ENCODE measurements at regions of chr9 and their contacts with region 1.

Region 1: GRCh38 chr9:72022841-72023240 is 37.6 kb downstream of the C9orf57 start:
- DNase-seq: no peak
- ATAC-seq: no peak
- H3K4me3 ChIP-seq: no peak overlapping the region
- H3K27ac ChIP-seq: no peak overlapping the region
- H3K4me1 ChIP-seq: no peaks in the 10 kb centered on the region
- H3K27me3 ChIP-seq: no peaks in the 10 kb centered on the region
- CTCF ChIP-seq: no peak
- POLR2A ChIP-seq: no peak

Region 2: DNA sequence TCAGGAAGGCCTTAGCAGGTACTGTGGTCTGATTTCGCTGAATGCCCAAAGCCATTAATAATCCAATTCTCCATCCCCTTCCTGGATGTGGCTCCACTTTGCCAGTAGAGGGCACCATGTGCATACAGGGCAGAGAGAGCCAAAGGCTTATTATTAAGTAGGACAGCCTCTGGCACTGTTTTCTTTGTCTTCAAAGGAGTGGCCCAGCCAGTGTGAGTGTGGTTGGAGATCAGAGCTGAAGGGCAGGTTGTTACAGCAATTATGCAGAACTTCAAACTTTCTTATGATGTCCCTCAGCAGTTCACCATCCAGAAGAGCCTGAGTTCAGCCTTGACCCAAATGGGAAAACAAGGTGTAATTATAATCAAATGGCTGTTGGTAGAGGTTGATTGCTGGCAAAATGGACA is 215.9 kb before region 1 on chr9:
- intact Hi-C with region 1: loop called (anchors 5 kb)
- DNase-seq: peak; percentile 71 to 84 (median 80)
- ATAC-seq: peak; percentile 100
- H3K4me3 ChIP-seq: no peak overlapping the region
- H3K27ac ChIP-seq: peak overlapping the region in 1 of 4 donors; percentile 49
- H3K4me1 ChIP-seq: no peaks in the 10 kb centered on the region
- H3K27me3 ChIP-seq: no peaks in the 10 kb centered on the region
- CTCF ChIP-seq: peak; percentile 76 to 97 (median 91)
- POLR2A ChIP-seq: no peak

Region 3: DNA sequence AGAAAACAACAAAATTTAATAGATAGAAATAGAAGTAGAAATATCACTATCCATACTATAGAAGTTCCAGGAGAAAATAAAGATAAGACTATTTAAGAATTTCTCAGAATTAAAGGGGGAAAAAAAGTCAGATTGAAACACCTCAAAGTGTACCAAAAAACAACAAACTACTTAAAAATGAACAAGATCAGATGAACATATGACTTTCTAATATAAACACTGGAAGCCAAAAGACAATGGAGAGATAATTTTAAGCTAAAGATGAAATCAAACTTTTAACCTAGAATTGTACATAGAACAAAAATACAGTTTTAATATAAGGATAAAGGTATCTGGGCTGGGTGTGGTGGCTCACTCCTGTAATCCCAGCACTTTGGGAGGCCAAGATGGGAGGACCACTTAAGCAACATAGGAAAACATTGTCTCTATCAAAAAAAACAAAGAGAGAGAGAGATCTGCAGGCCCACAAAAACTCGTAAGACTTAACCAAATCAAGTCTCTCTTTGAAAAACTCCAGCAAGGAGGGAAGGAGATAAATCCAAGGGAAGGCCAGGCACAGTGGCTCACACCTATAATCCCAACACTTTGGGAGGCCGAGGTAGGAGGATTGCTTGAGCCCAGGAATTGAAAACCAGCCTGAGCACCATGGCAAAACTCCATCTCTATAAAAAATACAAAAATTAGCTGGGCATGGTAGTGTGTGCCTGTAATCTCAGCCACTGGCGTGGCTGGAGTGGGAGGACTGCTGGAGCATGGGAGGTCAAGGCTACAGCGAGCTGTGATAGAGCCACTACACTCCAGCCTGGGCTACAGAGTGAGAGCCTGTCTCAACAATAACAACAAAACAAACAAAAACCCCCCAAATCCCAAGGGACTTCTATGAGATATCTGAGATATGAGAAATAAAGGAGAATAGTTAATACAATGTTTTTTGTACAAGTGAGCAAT is 144.2 kb before region 1 on chr9:
- intact Hi-C with region 1: no loop called
- DNase-seq: no peak
- ATAC-seq: no peak
- H3K4me3 ChIP-seq: no peak overlapping the region
- H3K27ac ChIP-seq: no peak overlapping the region
- H3K4me1 ChIP-seq: no peaks in the 10 kb centered on the region
- H3K27me3 ChIP-seq: no peaks in the 10 kb centered on the region
- CTCF ChIP-seq: no peak
- POLR2A ChIP-seq: no peak

Region 4: GRCh38 chr9:72169178-72169577 is 146.3 kb after region 1 on chr9:
- intact Hi-C with region 1: no loop called
- DNase-seq: no peak
- ATAC-seq: no peak
- H3K4me3 ChIP-seq: no peak overlapping the region
- H3K27ac ChIP-seq: no peak overlapping the region
- H3K4me1 ChIP-seq: peaks cover 6% of the 10 kb centered on the region
- H3K27me3 ChIP-seq: no peaks in the 10 kb centered on the region
- CTCF ChIP-seq: no peak
- POLR2A ChIP-seq: no peak